MCF 10A (cell line): ENCODE measurements at regions of chr5 and their contacts with region 1.

Region 1: GRCh38 chr5:127684726-127685467 is 18.3 kb upstream of the CCDC192 start:
- DNase-seq: peak; percentile 20
- H3K4me3 Mint-ChIP-seq: no peak overlapping the region
- H3K27ac Mint-ChIP-seq: peak overlapping the region; percentile 93
- H3K4me1 Mint-ChIP-seq: peaks cover 32% of the 10 kb centered on the region
- H3K27me3 Mint-ChIP-seq: no peaks in the 10 kb centered on the region
- CTCF ChIP-seq: no peak

Region 2: DNA sequence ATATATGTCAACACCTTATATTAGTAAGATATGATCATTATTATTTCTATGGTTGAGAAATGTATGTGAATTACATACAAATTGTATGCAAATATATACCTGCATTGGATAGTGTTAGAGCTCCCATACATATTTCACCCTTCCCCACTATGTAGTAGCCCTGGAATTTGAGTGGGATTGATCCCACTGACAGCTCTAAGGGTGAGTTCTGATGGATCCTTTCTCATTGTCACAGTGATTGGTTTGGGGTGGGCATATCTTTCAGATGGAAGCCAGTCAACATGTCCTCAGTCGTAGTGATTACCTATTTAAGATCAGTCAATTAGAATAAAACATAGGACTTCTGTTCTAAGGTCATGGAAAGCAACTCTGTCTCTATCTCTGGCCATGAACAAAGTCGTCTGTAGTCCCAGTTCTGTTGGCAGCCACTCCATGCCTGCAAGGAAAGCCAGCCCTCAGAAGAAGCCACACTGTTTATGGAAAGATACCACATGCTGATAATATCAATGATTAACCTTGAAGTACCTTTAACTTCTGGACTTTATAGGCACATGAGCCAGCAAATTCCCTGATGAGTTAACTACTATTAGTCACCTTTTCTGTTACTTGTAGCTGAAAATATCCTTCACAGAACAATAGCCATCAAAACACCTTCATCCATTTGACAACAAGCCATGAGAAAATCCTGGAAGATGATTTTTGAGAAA is 13.2 kb after region 1 on chr5:
- CTCF ChIA-PET with region 1: no interaction called
- POLR2A ChIA-PET with region 1: interaction called, 10 read pairs
- intact Hi-C with region 1: no loop called
- DNase-seq: peak; percentile 41
- H3K4me3 Mint-ChIP-seq: no peak overlapping the region
- H3K27ac Mint-ChIP-seq: peak overlapping the region; percentile 40
- H3K4me1 Mint-ChIP-seq: peaks cover 21% of the 10 kb centered on the region
- H3K27me3 Mint-ChIP-seq: peaks cover 25% of the 10 kb centered on the region
- CTCF ChIP-seq: no peak